ENCODE measurements at regions of chr2 and their contacts with region 1.

Region 1: DNA sequence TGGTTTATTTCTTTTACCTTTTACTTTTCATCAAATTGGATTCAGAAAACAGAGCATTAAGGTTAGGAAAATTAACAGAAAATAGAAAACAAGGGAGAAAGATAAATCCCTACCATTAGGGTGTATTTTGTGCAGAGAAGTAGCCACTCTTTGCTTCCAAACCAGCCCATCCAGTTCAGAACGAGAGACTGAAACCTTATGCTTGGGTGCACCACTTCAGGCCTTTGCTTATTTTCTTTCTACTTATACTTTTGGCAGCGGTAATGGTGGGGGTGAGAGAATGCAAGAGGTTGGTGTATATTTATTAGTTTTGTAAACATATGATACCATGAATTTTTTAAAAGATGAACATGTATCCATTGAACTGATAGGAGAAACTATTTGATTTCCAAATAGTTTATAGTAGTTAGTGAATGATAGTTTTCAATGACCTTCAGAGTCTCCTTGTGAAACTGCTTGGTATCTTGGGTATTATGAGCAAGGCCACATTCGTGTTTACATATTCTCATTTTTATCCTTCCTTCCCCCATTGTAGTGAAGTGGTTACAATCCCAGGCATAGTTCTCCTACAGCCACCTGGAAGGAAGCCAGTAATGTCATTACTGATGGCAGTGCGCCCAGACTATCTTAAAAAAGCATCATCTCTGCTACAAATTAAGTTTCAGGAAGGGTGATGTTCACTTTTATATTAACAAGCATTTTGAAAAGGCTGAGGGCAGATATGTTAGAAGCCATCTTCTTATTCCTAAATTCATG is 60.8 kb downstream of the MFSD6 start:
- DNase-seq: peak; percentile 52 to 91
- ATAC-seq: peak; percentile 82 to 93 (median 88)
- H3K4me3 ChIP-seq: peak overlapping the region in 3 of 10 donors; percentile 10 to 16 (median 12)
- H3K27ac ChIP-seq: peak overlapping the region; percentile 21 to 89 (median 82)
- H3K4me1 ChIP-seq: peaks cover 5 to 64% (median 40%) of the 10 kb centered on the region in 9 donors
- H3K27me3 ChIP-seq: no peaks in the 10 kb centered on the region
- CTCF ChIP-seq: no peak

Region 2: GRCh38 chr2:190415794-190416775 is 52.9 kb before region 1 on chr2:
- intact Hi-C with region 1: loop called in 3 of 10 experiments (anchors 5 to 10 kb)
- DNase-seq: no peak
- ATAC-seq: no peak
- H3K4me3 ChIP-seq: peak overlapping the region in 1 of 10 donors; percentile 8
- H3K27ac ChIP-seq: peak overlapping the region in 9 of 10 donors; percentile 0 to 75 (median 49)
- H3K4me1 ChIP-seq: peaks cover 0 to 67% (median 37%) of the 10 kb centered on the region in 9 donors
- H3K27me3 ChIP-seq: no peaks in the 10 kb centered on the region
- CTCF ChIP-seq: no peak